CD4-positive, alpha-beta T cell (primary cell): ENCODE measurements at regions of chr5 and their contacts with region 1.

Region 1: GRCh38 chr5:112995764-112996618 is 19.4 kb downstream of the DCP2 start:
- DNase-seq: peak; percentile 60 to 84 (median 76)
- ATAC-seq: peak; percentile 85
- H3K4me3 ChIP-seq: no peak overlapping the region
- H3K4me3 Mint-ChIP-seq: no peak overlapping the region
- H3K27ac ChIP-seq: no peak overlapping the region
- H3K27ac Mint-ChIP-seq: no peak overlapping the region
- H3K4me1 ChIP-seq: no peaks in the 10 kb centered on the region
- H3K4me1 Mint-ChIP-seq: peaks cover 52% of the 10 kb centered on the region
- H3K27me3 ChIP-seq: no peaks in the 10 kb centered on the region
- H3K27me3 Mint-ChIP-seq: no peaks in the 10 kb centered on the region
- CTCF ChIP-seq: peak; percentile 98

Region 2: GRCh38 chr5:112983363-112983762 is 12.6 kb before region 1 on chr5:
- CTCF ChIA-PET with region 1: interaction called, 10 read pairs
- POLR2A ChIA-PET with region 1: interaction called, 6 read pairs
- intact Hi-C with region 1: no loop called
- DNase-seq: no peak
- ATAC-seq: no peak
- H3K4me3 ChIP-seq: no peak overlapping the region
- H3K4me3 Mint-ChIP-seq: no peak overlapping the region
- H3K27ac ChIP-seq: no peak overlapping the region
- H3K27ac Mint-ChIP-seq: peak overlapping the region; percentile 56
- H3K4me1 ChIP-seq: peaks cover 12% of the 10 kb centered on the region
- H3K4me1 Mint-ChIP-seq: peaks cover 72% of the 10 kb centered on the region
- H3K27me3 ChIP-seq: no peaks in the 10 kb centered on the region
- H3K27me3 Mint-ChIP-seq: no peaks in the 10 kb centered on the region
- CTCF ChIP-seq: no peak

Region 3: GRCh38 chr5:113022661-113023060 is 26.7 kb after region 1 on chr5:
- CTCF ChIA-PET with region 1: interaction called, 10 read pairs
- POLR2A ChIA-PET with region 1: interaction called, 10 read pairs
- intact Hi-C with region 1: loop called in 1 of 2 experiments (anchors 2 kb)
- DNase-seq: peak in 4 of 14 experiments; percentile 1 to 87 (median 78)
- ATAC-seq: peak; percentile 86
- H3K4me3 ChIP-seq: no peak overlapping the region
- H3K4me3 Mint-ChIP-seq: peak overlapping the region; percentile 57
- H3K27ac ChIP-seq: peak overlapping the region; percentile 18 to 71
- H3K27ac Mint-ChIP-seq: peak overlapping the region; percentile 87
- H3K4me1 ChIP-seq: peaks cover 20% of the 10 kb centered on the region
- H3K4me1 Mint-ChIP-seq: peaks cover 77% of the 10 kb centered on the region
- H3K27me3 ChIP-seq: no peaks in the 10 kb centered on the region
- H3K27me3 Mint-ChIP-seq: no peaks in the 10 kb centered on the region
- CTCF ChIP-seq: no peak

Region 4: DNA sequence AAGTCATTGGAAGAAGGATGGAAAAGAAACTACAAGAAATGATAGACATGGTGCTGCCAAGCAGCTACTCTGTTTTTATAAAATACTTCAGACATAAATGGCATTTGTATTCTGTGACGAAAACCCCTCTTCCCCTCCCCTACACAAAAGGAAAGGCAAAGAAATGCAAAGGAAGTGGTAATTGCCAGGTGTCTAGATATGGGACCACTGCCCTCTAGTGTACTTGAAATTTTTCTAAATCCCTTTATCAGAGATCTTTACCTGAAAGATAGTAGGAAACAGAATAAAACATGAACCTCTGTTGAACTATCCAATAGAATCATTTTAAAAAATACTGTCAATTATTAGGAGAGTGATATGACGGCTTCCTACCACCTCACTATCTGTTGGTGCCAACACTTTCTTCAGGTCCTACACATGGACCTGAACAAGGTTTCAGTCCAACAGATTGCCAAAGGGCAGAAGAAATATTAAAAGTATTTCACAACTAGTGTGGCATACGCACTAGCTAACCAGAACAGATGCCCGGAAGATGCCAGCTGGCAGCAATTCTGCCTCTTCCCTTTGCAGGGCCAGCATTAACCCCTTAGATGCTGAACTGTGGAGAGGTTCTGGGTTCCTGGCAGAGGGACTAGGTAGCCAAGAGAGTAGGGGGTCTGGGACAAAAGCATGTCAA is 334.7 kb after region 1 on chr5:
- CTCF ChIA-PET with region 1: interaction called, 17 read pairs
- POLR2A ChIA-PET with region 1: interaction called, 6 read pairs
- intact Hi-C with region 1: loop called (anchors 1 kb)
- DNase-seq: peak in 4 of 14 experiments; percentile 14 to 78 (median 77)
- ATAC-seq: peak; percentile 90
- H3K4me3 ChIP-seq: no peak overlapping the region
- H3K4me3 Mint-ChIP-seq: no peak overlapping the region
- H3K27ac ChIP-seq: no peak overlapping the region
- H3K27ac Mint-ChIP-seq: peak overlapping the region; percentile 60
- H3K4me1 ChIP-seq: no peaks in the 10 kb centered on the region
- H3K4me1 Mint-ChIP-seq: peaks cover 21% of the 10 kb centered on the region
- H3K27me3 ChIP-seq: no peaks in the 10 kb centered on the region
- H3K27me3 Mint-ChIP-seq: no peaks in the 10 kb centered on the region
- CTCF ChIP-seq: peak; percentile 76

Region 5: GRCh38 chr5:113378959-113379541 is 383.1 kb after region 1 on chr5:
- CTCF ChIA-PET with region 1: no interaction called
- POLR2A ChIA-PET with region 1: no interaction called
- intact Hi-C with region 1: loop called in 1 of 2 experiments (anchors 5 kb)
- DNase-seq: peak; percentile 19 to 74 (median 41)
- ATAC-seq: peak; percentile 68
- H3K4me3 ChIP-seq: no peak overlapping the region
- H3K4me3 Mint-ChIP-seq: peak overlapping the region; percentile 7
- H3K27ac ChIP-seq: no peak overlapping the region
- H3K27ac Mint-ChIP-seq: no peak overlapping the region
- H3K4me1 ChIP-seq: peaks cover 11% of the 10 kb centered on the region
- H3K4me1 Mint-ChIP-seq: peaks cover 58% of the 10 kb centered on the region
- H3K27me3 ChIP-seq: peaks cover 0 to 4% of the 10 kb centered on the region in 2 experiments
- H3K27me3 Mint-ChIP-seq: peaks cover 32% of the 10 kb centered on the region
- CTCF ChIP-seq: peak; percentile 82